Gastrocnemius medialis (tissue), 4 donors: ENCODE measurements at regions of chr9 and their contacts with region 1.

Region 1: DNA sequence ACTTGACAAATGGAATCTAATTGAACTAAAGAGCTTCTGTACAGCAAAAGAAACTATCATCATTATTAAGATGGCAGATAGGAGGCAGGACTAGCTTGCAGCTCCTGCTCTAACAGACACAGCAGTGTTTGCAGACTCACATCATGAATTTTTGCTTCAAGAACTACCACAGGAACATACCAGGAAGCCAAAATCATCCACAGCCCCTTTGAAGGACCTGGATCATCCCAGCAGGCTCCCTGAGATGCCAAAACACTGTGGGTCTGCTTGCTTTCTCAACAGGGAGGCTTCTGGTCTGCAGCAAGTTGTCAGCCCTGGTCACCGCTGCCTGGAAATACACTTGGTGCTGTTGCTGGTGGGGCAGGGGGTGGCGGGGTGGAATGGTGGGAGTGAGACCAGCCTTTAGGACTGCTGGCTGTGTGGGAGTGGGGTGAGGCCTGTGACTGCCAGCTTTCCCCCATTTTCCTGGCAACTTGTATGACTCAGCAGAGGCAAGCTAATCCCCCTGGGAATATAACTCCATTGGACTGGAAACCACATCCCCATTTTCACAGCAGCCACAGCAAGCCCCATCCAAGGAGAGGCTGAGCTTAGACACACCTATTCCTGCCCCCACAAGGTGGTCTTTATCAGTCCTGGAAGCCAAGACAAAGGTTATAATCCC is 533.8 kb upstream of the CYLC2 start:
- DNase-seq: no peak
- ATAC-seq: no peak
- H3K4me3 ChIP-seq: no peak overlapping the region
- H3K27ac ChIP-seq: no peak overlapping the region
- H3K4me1 ChIP-seq: no peaks in the 10 kb centered on the region
- H3K27me3 ChIP-seq: no peaks in the 10 kb centered on the region
- CTCF ChIP-seq: no peak
- POLR2A ChIP-seq: no peak

Region 2: GRCh38 chr9:101999441-101999840 is 461.8 kb before region 1 on chr9:
- in situ Hi-C with region 1: no loop called
- intact Hi-C with region 1: no loop called
- DNase-seq: no peak
- ATAC-seq: no peak
- H3K4me3 ChIP-seq: no peak overlapping the region
- H3K27ac ChIP-seq: no peak overlapping the region
- H3K4me1 ChIP-seq: no peaks in the 10 kb centered on the region
- H3K27me3 ChIP-seq: no peaks in the 10 kb centered on the region
- CTCF ChIP-seq: no peak
- POLR2A ChIP-seq: no peak

Region 3: DNA sequence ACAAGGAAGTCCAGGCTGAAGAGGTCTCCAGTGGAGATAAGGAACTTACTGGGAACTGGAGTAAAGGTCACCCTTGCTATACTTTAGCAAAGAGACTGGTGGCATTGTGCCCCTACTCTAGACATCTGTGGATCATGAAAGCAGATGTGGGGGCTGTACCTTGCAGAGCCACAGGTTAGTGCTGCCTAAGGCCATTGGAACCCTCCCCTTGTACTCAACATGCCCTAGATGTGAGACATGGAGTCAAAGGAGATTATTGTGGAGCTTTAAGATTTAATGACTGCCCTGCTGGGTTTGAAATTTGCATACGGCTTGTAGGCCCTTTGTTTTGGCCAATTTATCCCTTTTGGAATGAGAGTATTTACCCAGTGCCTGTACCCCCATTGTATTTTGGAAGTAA is 325.5 kb before region 1 on chr9:
- in situ Hi-C with region 1: no loop called
- intact Hi-C with region 1: no loop called
- DNase-seq: no peak
- ATAC-seq: no peak
- H3K4me3 ChIP-seq: no peak overlapping the region
- H3K27ac ChIP-seq: no peak overlapping the region
- H3K4me1 ChIP-seq: no peaks in the 10 kb centered on the region
- H3K27me3 ChIP-seq: no peaks in the 10 kb centered on the region
- CTCF ChIP-seq: no peak
- POLR2A ChIP-seq: no peak

Region 4: DNA sequence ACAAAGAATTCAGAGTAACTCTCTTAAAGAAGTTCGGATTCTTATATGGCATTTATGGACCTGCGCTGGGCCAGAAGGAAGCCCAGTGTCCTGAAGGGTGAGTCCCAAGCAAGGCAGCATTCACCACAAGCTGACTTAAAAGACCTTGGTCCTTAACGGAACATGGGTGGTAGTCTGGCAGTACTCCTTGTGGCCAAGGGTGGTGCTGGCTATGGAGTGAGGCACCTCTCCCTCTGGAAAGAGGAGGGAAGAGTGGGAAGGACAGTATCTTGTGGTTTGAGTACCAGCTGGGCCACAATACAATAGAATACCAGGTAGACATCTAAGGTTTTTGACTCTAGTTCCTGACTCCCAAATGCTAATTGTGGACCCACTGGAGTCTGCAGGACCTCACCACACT is 108.1 kb after region 1 on chr9:
- in situ Hi-C with region 1: loop called in 1 of 4 experiments (anchors 25 kb)
- intact Hi-C with region 1: no loop called
- DNase-seq: no peak
- ATAC-seq: no peak
- H3K4me3 ChIP-seq: no peak overlapping the region
- H3K27ac ChIP-seq: no peak overlapping the region
- H3K4me1 ChIP-seq: no peaks in the 10 kb centered on the region
- H3K27me3 ChIP-seq: no peaks in the 10 kb centered on the region
- CTCF ChIP-seq: no peak
- POLR2A ChIP-seq: no peak

Region 5: GRCh38 chr9:102855641-102856040 is 394.4 kb after region 1 on chr9:
- in situ Hi-C with region 1: no loop called
- intact Hi-C with region 1: loop called (anchors 5 kb)
- DNase-seq: no peak
- ATAC-seq: no peak
- H3K4me3 ChIP-seq: no peak overlapping the region
- H3K27ac ChIP-seq: no peak overlapping the region
- H3K4me1 ChIP-seq: no peaks in the 10 kb centered on the region
- H3K27me3 ChIP-seq: no peaks in the 10 kb centered on the region
- CTCF ChIP-seq: no peak
- POLR2A ChIP-seq: no peak